H1 (cell line): ENCODE measurements at regions of chr6 and their contacts with region 1.

Region 1: GRCh38 chr6:122530440-122531046 is 58.9 kb upstream of the SERINC1 start:
- DNase-seq: peak; percentile 15 to 59
- H3K4me3 ChIP-seq: no peak overlapping the region
- H3K27ac ChIP-seq: no peak overlapping the region
- H3K4me1 ChIP-seq: no peaks in the 10 kb centered on the region
- H3K27me3 ChIP-seq: no peaks in the 10 kb centered on the region
- CTCF ChIP-seq: peak in 2 of 3 experiments; percentile 84 to 87; a peak in 3 of 4 replicates
- EP300 ChIP-seq: no peak
- POLR2A ChIP-seq: no peak
- RAD21 ChIP-seq: peak; percentile 91 to 94

Region 2: GRCh38 chr6:122471107-122472021 is 59.2 kb before region 1 on chr6 and contains the start of gene SERINC1:
- CTCF ChIA-PET with region 1: interaction called, 17 read pairs
- POLR2A ChIA-PET with region 1: no interaction called
- DNase-seq: peak; percentile 71 to 83
- H3K4me3 ChIP-seq: peak within 1 kb of the TSS; percentile 91 to 99 (median 94)
- H3K27ac ChIP-seq: peak within 1 kb of the TSS; percentile 94
- H3K4me1 ChIP-seq: no peaks in the 10 kb centered on the region
- H3K27me3 ChIP-seq: no peaks in the 10 kb centered on the region
- CTCF ChIP-seq: no peak
- EP300 ChIP-seq: no peak
- POLR2A ChIP-seq: peak; percentile 87 to 90
- RAD21 ChIP-seq: no peak
- total RNA-seq, gene SERINC1: 38.0 and 38.6 TPM in 2 replicates

Region 3: GRCh38 chr6:122491919-122492555 is 38.5 kb before region 1 on chr6:
- CTCF ChIA-PET with region 1: interaction called, 93 read pairs
- POLR2A ChIA-PET with region 1: interaction called, 5 read pairs
- DNase-seq: peak in 1 of 2 experiments; percentile 74
- H3K4me3 ChIP-seq: no peak overlapping the region
- H3K27ac ChIP-seq: no peak overlapping the region
- H3K4me1 ChIP-seq: no peaks in the 10 kb centered on the region
- H3K27me3 ChIP-seq: no peaks in the 10 kb centered on the region
- CTCF ChIP-seq: peak; percentile 64 to 82 (median 75)
- EP300 ChIP-seq: no peak
- POLR2A ChIP-seq: no peak
- RAD21 ChIP-seq: peak; percentile 85 to 87

Region 4: DNA sequence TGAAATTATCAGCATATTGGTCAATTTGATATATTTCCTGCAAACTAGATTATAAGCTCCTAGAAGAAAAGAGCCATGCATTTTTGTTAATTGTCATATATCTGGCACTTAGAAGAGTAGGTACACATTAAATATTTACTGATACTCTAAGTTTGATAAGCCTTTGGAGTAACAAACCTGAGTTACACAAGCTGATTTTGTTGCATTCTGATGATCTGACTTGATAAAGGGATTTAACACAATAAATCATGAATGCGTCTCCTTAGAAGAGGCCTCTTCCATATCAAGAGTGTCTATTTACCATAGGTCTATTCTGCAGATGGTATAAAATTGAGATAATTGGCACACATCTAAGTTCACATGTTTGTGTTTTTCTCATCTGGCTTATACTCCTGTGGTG is 10.4 kb before region 1 on chr6:
- CTCF ChIA-PET with region 1: interaction called, 32 read pairs
- POLR2A ChIA-PET with region 1: interaction called, 8 read pairs
- DNase-seq: no peak
- H3K4me3 ChIP-seq: no peak overlapping the region
- H3K27ac ChIP-seq: no peak overlapping the region
- H3K4me1 ChIP-seq: no peaks in the 10 kb centered on the region
- H3K27me3 ChIP-seq: no peaks in the 10 kb centered on the region
- CTCF ChIP-seq: no peak
- EP300 ChIP-seq: no peak
- POLR2A ChIP-seq: no peak
- RAD21 ChIP-seq: no peak